Sciatic nerve (tissue), 2 donors: ENCODE measurements at regions of chrX and their contacts with region 1.

Region 1: DNA sequence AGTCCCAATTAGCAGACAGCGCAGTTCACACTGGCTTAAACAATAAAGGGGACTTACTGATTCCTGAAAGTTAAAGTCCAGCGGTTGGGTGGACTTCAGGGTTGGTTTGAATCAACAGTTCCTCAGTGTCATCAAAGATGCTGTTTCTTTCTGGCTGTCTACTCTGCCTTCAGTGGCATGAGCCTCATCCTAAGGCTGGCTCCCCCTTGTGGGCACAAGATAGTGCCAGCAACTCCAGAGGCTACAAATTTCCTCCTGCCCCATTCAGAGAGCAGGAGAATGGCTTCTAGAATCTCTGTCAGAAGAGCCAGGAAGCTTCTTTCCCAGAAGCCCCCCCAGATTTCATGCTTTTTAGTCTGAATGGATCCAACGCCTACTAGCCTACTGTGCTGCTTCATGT is 82.4 kb upstream of the MTM1 start:
- DNase-seq: no peak
- ATAC-seq: peak; percentile 62

Region 2: GRCh38 chrX:150365051-150365989 is 120.7 kb before region 1 on chrX:
- intact Hi-C with region 1: loop called (anchors 10 kb)
- DNase-seq: peak; percentile 91
- ATAC-seq: peak; percentile 74

Region 3: GRCh38 chrX:150517303-150517910 is 31.4 kb after region 1 on chrX:
- intact Hi-C with region 1: no loop called
- DNase-seq: no peak
- ATAC-seq: peak; percentile 65